ENCODE measurements at regions of chr17 and their contacts with region 1.

Region 1: GRCh38 chr17:62968445-62968923 is 2.4 kb downstream of the TANC2 start:
- DNase-seq: peak; percentile 83
- ATAC-seq: peak; percentile 95
- H3K4me3 ChIP-seq: no peak overlapping the region
- H3K27ac ChIP-seq: no peak overlapping the region
- H3K4me1 ChIP-seq: peaks cover 13% of the 10 kb centered on the region
- H3K27me3 ChIP-seq: peaks cover 7 to 28% of the 10 kb centered on the region in 2 experiments
- CTCF ChIP-seq: peak; percentile 82
- EP300 ChIP-seq: no peak
- POLR2A ChIP-seq: no peak
- RAD21 ChIP-seq: peak; percentile 68; the same call in 1 of the 2 replicates

Region 2: DNA sequence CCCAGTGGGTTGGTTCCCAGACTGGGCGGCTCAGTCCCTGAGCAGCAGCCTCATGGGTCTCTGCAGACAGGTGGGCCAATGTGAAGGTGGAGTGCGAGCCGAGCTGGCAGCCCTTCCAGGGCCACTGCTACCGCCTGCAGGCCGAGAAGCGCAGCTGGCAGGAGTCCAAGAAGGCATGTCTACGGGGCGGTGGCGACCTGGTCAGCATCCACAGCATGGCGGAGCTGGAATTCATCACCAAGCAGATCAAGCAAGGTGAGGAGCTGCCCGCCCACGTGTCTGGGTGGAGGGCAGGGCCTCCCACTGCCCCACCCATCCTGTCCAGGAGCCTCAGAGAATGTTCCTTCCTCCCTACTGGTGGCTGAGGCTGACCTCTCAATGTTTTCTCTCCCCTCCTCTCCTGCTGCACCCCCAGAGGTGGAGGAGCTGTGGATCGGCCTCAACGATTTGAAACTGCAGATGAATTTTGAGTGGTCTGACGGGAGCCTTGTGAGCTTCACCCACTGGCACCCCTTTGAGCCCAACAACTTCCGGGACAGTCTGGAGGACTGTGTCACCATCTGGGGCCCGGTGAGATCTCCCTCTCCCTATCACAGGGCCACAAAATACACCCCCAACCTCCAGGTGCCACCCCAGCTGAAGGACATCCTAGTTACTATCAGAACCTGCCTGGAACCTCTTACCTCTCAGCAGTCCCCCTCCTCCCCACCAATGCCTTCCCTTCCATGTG is 296.7 kb before region 1 on chr17:
- CTCF ChIA-PET with region 1: interaction called, 17 read pairs
- POLR2A ChIA-PET with region 1: no interaction called
- in situ Hi-C with region 1: no loop called
- intact Hi-C with region 1: loop called (anchors 1 kb)
- DNase-seq: peak; percentile 36
- ATAC-seq: peak; percentile 62
- H3K4me3 ChIP-seq: no peak overlapping the region; a peak in 1 of 6 replicates
- H3K27ac ChIP-seq: no peak overlapping the region
- H3K4me1 ChIP-seq: peaks cover 5% of the 10 kb centered on the region; the same call in 1 of the 2 replicates
- H3K27me3 ChIP-seq: peaks cover 7 to 48% of the 10 kb centered on the region in 2 experiments; a peak in 3 of 5 replicates
- CTCF ChIP-seq: peak; percentile 72
- EP300 ChIP-seq: no peak
- POLR2A ChIP-seq: no peak
- RAD21 ChIP-seq: no peak

Region 3: GRCh38 chr17:62703775-62704378 is 264.6 kb before region 1 on chr17:
- CTCF ChIA-PET with region 1: interaction called, 78 read pairs
- POLR2A ChIA-PET with region 1: no interaction called
- in situ Hi-C with region 1: loop called (anchors 5 kb)
- intact Hi-C with region 1: loop called (anchors 1 kb)
- DNase-seq: no peak
- ATAC-seq: peak; percentile 95
- H3K4me3 ChIP-seq: peak overlapping the region in 2 of 3 experiments; percentile 40 to 70; a peak in 3 of 6 replicates
- H3K27ac ChIP-seq: no peak overlapping the region
- H3K4me1 ChIP-seq: peaks cover 11% of the 10 kb centered on the region; the same call in 1 of the 2 replicates
- H3K27me3 ChIP-seq: peaks cover 21 to 69% of the 10 kb centered on the region in 2 experiments
- CTCF ChIP-seq: peak; percentile 93
- EP300 ChIP-seq: no peak
- POLR2A ChIP-seq: no peak
- RAD21 ChIP-seq: peak; percentile 98

Region 4: GRCh38 chr17:62911114-62911513 is 57.4 kb before region 1 on chr17:
- CTCF ChIA-PET with region 1: no interaction called
- POLR2A ChIA-PET with region 1: no interaction called
- in situ Hi-C with region 1: no loop called
- intact Hi-C with region 1: no loop called
- DNase-seq: no peak
- ATAC-seq: no peak
- H3K4me3 ChIP-seq: no peak overlapping the region
- H3K27ac ChIP-seq: no peak overlapping the region
- H3K4me1 ChIP-seq: peaks cover 5% of the 10 kb centered on the region; the same call in 1 of the 2 replicates
- H3K27me3 ChIP-seq: no peaks in the 10 kb centered on the region; a peak in 2 of 5 replicates
- CTCF ChIP-seq: no peak
- EP300 ChIP-seq: no peak
- POLR2A ChIP-seq: no peak
- RAD21 ChIP-seq: no peak

Region 5: GRCh38 chr17:62950086-62950485 is 18.4 kb before region 1 on chr17:
- CTCF ChIA-PET with region 1: no interaction called
- POLR2A ChIA-PET with region 1: no interaction called
- in situ Hi-C with region 1: no loop called
- intact Hi-C with region 1: no loop called
- DNase-seq: no peak
- ATAC-seq: no peak
- H3K4me3 ChIP-seq: no peak overlapping the region
- H3K27ac ChIP-seq: no peak overlapping the region
- H3K4me1 ChIP-seq: no peaks in the 10 kb centered on the region
- H3K27me3 ChIP-seq: peaks cover 0 to 8% of the 10 kb centered on the region in 2 experiments; a peak in 1 of 5 replicates
- CTCF ChIP-seq: no peak
- EP300 ChIP-seq: no peak
- POLR2A ChIP-seq: no peak
- RAD21 ChIP-seq: no peak

Region 6: GRCh38 chr17:62995377-62995885 is 26.9 kb after region 1 on chr17:
- CTCF ChIA-PET with region 1: no interaction called
- POLR2A ChIA-PET with region 1: no interaction called
- in situ Hi-C with region 1: no loop called
- intact Hi-C with region 1: no loop called
- DNase-seq: peak; percentile 20
- ATAC-seq: peak; percentile 88
- H3K4me3 ChIP-seq: no peak overlapping the region
- H3K27ac ChIP-seq: no peak overlapping the region
- H3K4me1 ChIP-seq: no peaks in the 10 kb centered on the region
- H3K27me3 ChIP-seq: no peaks in the 10 kb centered on the region; a peak in 1 of 5 replicates
- CTCF ChIP-seq: peak; percentile 63
- EP300 ChIP-seq: no peak
- POLR2A ChIP-seq: no peak
- RAD21 ChIP-seq: no peak

Region 7: DNA sequence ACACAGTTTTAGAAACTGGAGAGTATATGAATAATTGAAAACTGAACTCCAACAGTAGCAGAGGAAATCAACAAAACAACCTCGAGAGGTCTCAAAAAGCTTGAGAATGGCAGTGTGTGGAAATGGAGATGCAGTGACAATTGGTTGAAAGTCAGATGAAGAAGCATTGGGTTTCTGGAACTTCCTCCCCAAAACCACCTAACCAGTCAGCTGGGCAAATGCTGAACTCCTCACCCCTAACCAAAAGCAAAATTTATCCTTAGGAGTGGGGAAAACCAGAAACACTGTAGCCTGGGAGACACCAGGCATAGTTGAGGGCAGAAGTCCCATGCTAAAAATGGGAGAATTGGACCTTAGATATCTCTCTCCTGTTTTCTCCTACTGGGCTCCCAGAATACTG is 107.5 kb after region 1 on chr17:
- CTCF ChIA-PET with region 1: no interaction called
- POLR2A ChIA-PET with region 1: no interaction called
- in situ Hi-C with region 1: no loop called
- intact Hi-C with region 1: no loop called
- DNase-seq: no peak
- ATAC-seq: no peak
- H3K4me3 ChIP-seq: no peak overlapping the region
- H3K27ac ChIP-seq: no peak overlapping the region
- H3K4me1 ChIP-seq: no peaks in the 10 kb centered on the region
- H3K27me3 ChIP-seq: no peaks in the 10 kb centered on the region
- CTCF ChIP-seq: no peak
- EP300 ChIP-seq: no peak
- POLR2A ChIP-seq: no peak
- RAD21 ChIP-seq: no peak